CD8-positive, alpha-beta T cell (primary cell): ENCODE measurements at regions of chr5 and their contacts with region 1.

Region 1: GRCh38 chr5:177311723-177312648 is at the start of gene MXD3:
- DNase-seq: peak; percentile 88 to 96 (median 94)
- ATAC-seq: peak; percentile 91
- H3K4me3 ChIP-seq: peak within 1 kb of the TSS; percentile 63 to 79
- H3K4me3 Mint-ChIP-seq: peak within 1 kb of the TSS; percentile 80
- H3K27ac ChIP-seq: peak within 1 kb of the TSS in 1 of 2 experiments; percentile 58
- H3K27ac Mint-ChIP-seq: peak within 1 kb of the TSS; percentile 49
- H3K4me1 ChIP-seq: peaks cover 36% of the 10 kb centered on the region
- H3K4me1 Mint-ChIP-seq: peaks cover 25% of the 10 kb centered on the region
- H3K27me3 ChIP-seq: no peaks in the 10 kb centered on the region
- H3K27me3 Mint-ChIP-seq: peaks cover 2% of the 10 kb centered on the region
- CTCF ChIP-seq: no peak
- total RNA-seq, gene MXD3: 6.2 to 8.5 TPM

Region 2: DNA sequence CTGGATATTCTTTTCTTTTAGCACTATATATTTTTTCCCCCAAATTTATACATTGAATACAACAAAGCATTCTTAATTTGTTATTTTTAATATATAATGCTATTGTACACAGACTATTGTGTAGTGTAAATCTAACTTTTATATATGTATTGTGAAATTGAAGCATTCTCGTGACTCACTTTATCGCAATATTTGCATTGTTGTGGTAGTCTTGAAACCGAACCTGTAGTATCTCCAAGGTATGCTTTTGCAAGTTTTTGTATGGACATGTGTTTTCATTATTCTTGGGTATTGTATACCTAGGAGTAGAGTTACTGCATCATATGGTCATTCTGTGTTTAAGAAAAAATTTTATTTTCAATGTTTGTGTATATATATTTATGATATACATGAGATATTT is 128.8 kb before region 1 on chr5:
- CTCF ChIA-PET with region 1: no interaction called
- POLR2A ChIA-PET with region 1: no interaction called
- intact Hi-C with region 1: no loop called
- DNase-seq: no peak
- ATAC-seq: no peak
- H3K4me3 ChIP-seq: no peak overlapping the region
- H3K4me3 Mint-ChIP-seq: no peak overlapping the region
- H3K27ac ChIP-seq: no peak overlapping the region
- H3K27ac Mint-ChIP-seq: no peak overlapping the region
- H3K4me1 ChIP-seq: peaks cover 6% of the 10 kb centered on the region
- H3K4me1 Mint-ChIP-seq: peaks cover 49% of the 10 kb centered on the region
- H3K27me3 ChIP-seq: no peaks in the 10 kb centered on the region
- H3K27me3 Mint-ChIP-seq: no peaks in the 10 kb centered on the region
- CTCF ChIP-seq: no peak

Region 3: DNA sequence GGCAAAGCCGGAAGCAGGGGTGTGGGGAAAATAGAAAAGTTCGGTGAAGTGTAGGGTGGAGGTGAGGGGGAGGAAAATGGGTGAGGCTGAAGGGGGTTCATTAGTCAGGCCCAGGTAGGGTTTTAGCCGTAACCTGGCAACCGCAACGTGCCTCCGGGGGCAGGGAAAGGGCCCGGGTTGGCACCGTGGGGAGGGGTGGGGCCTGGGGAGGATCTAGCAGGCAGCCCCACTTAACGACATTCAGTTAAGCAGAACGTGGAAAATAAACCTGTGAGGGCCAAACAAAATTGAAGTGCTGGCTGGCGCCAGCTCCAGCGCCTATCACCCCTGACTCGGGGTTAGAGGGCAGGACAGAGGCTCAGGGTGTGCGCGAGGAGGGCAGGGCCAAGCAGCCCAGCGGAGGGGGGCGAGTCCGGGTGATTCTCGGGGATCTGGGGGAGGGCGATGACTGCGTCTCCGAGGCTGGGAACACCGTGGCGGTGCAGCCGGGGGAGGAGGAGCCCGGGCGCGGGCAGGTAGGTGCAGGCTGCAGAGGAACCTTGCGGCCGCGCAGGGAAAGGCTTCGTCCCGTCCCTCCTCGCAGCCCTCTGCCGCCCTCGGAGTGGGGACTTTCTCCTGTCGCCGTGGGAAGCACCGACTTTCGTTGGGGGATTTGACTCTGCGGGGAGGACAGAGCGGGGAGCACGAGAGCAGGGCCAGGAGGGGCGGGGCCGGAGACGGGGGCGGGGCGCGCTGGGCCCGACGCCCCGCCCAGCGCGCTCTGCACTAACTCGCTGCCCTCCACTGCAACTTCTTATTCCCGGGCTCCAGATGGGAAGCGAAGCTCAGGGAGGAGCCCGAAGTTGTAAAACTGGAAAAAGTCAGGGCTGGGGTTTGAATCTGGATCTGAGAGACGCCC is 50.9 kb after region 1 on chr5:
- CTCF ChIA-PET with region 1: interaction called, 18 read pairs
- POLR2A ChIA-PET with region 1: no interaction called
- intact Hi-C with region 1: loop called in 1 of 2 experiments (anchors 1 kb)
- DNase-seq: peak; percentile 31 to 92 (median 67)
- ATAC-seq: peak; percentile 74
- H3K4me3 ChIP-seq: peak overlapping the region; percentile 47 to 54
- H3K4me3 Mint-ChIP-seq: peak overlapping the region; percentile 84
- H3K27ac ChIP-seq: peak overlapping the region; percentile 46 to 70
- H3K27ac Mint-ChIP-seq: peak overlapping the region; percentile 89
- H3K4me1 ChIP-seq: peaks cover 70% of the 10 kb centered on the region
- H3K4me1 Mint-ChIP-seq: peaks cover 67% of the 10 kb centered on the region
- H3K27me3 ChIP-seq: no peaks in the 10 kb centered on the region
- H3K27me3 Mint-ChIP-seq: no peaks in the 10 kb centered on the region
- CTCF ChIP-seq: no peak

Region 4: DNA sequence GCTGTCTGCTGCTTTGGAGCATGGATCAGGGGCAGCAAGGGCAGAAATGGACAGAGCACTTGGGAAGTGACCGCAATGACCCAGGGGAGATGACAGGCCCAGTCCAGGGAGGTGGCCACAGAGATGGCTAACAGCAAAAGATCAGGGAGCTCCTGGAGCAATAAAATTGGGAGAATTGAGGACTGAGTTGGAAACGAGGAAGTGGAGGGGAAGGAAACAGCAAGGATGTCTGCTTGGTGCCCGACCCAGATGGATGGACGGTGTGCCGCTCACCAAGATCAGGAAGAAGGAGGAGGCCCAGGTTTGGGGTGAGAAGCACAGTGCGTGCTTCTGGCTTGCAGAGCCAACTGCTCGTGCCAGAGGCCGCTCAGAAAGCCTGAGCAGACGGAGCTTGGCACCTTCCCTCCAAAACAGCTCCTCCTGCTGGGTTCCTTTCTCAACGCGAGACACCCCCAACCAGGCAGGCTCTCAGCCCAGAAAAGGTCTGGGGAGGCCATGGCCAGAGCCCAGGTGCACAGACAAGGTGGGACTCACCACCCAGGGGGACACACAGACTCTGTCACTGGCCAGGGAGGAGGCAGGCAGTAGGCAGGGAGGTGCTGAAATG is 70.5 kb after region 1 on chr5:
- CTCF ChIA-PET with region 1: interaction called, 14 read pairs
- POLR2A ChIA-PET with region 1: no interaction called
- intact Hi-C with region 1: no loop called
- DNase-seq: peak in 3 of 9 experiments; percentile 37 to 64 (median 51)
- ATAC-seq: peak; percentile 70
- H3K4me3 ChIP-seq: no peak overlapping the region
- H3K4me3 Mint-ChIP-seq: no peak overlapping the region
- H3K27ac ChIP-seq: no peak overlapping the region
- H3K27ac Mint-ChIP-seq: no peak overlapping the region
- H3K4me1 ChIP-seq: peaks cover 32% of the 10 kb centered on the region
- H3K4me1 Mint-ChIP-seq: peaks cover 30% of the 10 kb centered on the region
- H3K27me3 ChIP-seq: no peaks in the 10 kb centered on the region
- H3K27me3 Mint-ChIP-seq: no peaks in the 10 kb centered on the region
- CTCF ChIP-seq: no peak

Region 5: DNA sequence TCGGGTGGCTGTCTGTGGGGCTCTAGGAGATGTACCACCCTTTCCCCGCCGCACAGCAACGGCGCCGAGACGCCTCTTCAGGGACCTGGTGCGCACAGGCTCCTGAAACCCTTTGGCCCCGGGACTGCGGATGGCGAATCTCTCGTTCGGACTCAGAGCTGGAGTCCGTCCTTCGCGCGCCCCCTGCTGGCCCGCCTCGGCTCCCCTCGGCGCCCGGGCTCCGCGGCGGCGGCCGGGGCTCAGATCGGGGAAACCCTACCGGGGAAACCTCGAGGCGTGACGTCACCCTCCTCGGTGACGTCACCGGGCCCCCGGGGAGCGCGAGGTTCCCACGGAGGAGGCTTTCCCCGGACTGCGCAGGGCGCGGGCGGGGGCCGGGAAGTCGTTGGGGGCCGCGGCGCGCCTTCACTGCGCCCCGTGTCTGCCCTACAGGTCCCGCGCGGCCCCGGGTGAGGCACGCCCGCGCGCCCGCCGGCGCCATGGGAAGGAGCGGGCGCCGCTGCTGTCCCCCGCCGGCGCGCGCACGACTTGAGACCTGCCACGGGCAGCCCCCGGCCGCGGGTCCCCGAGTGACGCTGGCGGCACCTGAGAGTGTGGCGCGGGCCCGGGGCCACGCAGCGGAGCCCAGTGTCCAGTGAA is 142.5 kb after region 1 on chr5:
- CTCF ChIA-PET with region 1: interaction called, 11 read pairs
- POLR2A ChIA-PET with region 1: interaction called, 5 read pairs
- intact Hi-C with region 1: no loop called
- DNase-seq: peak; percentile 90 to 98 (median 94)
- ATAC-seq: peak; percentile 55
- H3K4me3 ChIP-seq: peak overlapping the region; percentile 64 to 93
- H3K4me3 Mint-ChIP-seq: peak overlapping the region; percentile 86
- H3K27ac ChIP-seq: peak overlapping the region; percentile 88 to 96
- H3K27ac Mint-ChIP-seq: peak overlapping the region; percentile 85
- H3K4me1 ChIP-seq: peaks cover 16% of the 10 kb centered on the region
- H3K4me1 Mint-ChIP-seq: peaks cover 18% of the 10 kb centered on the region
- H3K27me3 ChIP-seq: no peaks in the 10 kb centered on the region
- H3K27me3 Mint-ChIP-seq: no peaks in the 10 kb centered on the region
- CTCF ChIP-seq: peak; percentile 84

Region 6: GRCh38 chr5:177599731-177600507 is 287.9 kb after region 1 on chr5 and contains the start of gene B4GALT7:
- CTCF ChIA-PET with region 1: no interaction called
- POLR2A ChIA-PET with region 1: no interaction called
- intact Hi-C with region 1: loop called in 1 of 2 experiments (anchors 5 kb)
- DNase-seq: peak; percentile 73 to 94 (median 82)
- ATAC-seq: peak; percentile 91
- H3K4me3 ChIP-seq: peak within 1 kb of the TSS; percentile 90 to 92
- H3K4me3 Mint-ChIP-seq: peak within 1 kb of the TSS; percentile 90
- H3K27ac ChIP-seq: peak within 1 kb of the TSS; percentile 65 to 78
- H3K27ac Mint-ChIP-seq: peak within 1 kb of the TSS; percentile 83
- H3K4me1 ChIP-seq: peaks cover 13% of the 10 kb centered on the region
- H3K4me1 Mint-ChIP-seq: peaks cover 29% of the 10 kb centered on the region
- H3K27me3 ChIP-seq: no peaks in the 10 kb centered on the region
- H3K27me3 Mint-ChIP-seq: no peaks in the 10 kb centered on the region
- CTCF ChIP-seq: no peak
- total RNA-seq, gene B4GALT7: 33.4 to 36.6 TPM